ENCODE measurements at regions of chr1 and their contacts with region 1.

Region 1: DNA sequence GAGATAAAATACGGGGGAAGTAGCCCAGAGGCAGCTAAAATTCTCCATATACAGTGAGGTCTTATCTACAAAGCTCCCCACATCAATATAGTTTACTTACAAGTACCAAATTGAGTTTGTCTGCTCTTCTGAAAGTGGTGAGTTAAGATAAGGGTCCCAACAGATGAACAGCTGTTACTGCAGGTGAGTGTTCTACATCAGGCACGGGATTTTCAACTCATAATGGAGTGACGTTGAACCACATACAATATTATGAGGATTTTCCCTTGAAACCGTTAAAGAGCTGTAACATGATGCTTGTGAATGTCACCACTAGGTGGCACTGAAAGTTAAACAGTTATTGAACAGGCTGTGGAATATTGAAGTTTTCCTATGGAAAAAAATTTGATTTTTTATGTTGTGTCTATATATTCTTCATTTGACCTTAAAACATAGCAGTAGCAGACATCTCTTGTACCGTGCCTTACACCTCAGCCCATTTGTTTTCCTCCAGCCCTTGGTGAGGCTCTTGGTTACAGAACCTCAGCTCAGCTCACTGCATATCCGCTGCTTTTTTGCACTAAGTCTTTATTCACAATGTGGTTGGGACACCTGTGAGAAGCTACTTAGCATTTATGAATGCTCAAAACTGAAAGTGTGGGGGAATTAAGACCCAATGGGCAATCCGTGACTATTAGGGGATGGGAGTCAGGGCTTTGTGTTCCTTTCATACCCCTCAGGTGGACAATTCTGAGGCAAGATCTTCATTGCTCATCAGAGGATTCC is 23.2 kb downstream of the CD1D start:
- DNase-seq: no peak
- ATAC-seq: peak; percentile 71
- H3K4me3 Mint-ChIP-seq: no peak overlapping the region
- H3K27ac Mint-ChIP-seq: no peak overlapping the region
- H3K4me1 Mint-ChIP-seq: peaks cover 11% of the 10 kb centered on the region
- H3K27me3 Mint-ChIP-seq: peaks cover 30% of the 10 kb centered on the region

Region 2: DNA sequence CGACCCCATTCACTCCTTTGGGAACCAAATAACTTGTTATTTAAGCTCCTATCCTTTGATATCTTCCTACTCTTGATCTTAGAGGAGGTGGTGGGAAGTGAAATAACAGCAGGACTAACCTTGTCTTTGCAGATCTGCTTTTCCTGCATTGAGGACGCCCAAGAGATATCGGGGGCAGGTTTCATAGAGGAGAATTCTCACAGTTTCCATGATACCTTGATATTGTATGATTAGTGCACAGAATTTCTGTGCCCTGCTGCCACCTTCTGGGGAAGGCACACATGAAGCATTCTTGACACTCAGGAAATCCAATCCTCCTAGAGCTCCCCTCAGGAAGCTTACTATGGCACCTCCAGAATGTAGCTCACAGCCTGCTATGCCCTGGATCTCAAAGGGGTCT is 125.9 kb after region 1 on chr1:
- CTCF ChIA-PET with region 1: interaction called, 20 read pairs
- DNase-seq: no peak
- ATAC-seq: no peak
- H3K4me3 Mint-ChIP-seq: no peak overlapping the region
- H3K27ac Mint-ChIP-seq: no peak overlapping the region
- H3K4me1 Mint-ChIP-seq: peaks cover 12% of the 10 kb centered on the region
- H3K27me3 Mint-ChIP-seq: peaks cover 4% of the 10 kb centered on the region

Region 3: DNA sequence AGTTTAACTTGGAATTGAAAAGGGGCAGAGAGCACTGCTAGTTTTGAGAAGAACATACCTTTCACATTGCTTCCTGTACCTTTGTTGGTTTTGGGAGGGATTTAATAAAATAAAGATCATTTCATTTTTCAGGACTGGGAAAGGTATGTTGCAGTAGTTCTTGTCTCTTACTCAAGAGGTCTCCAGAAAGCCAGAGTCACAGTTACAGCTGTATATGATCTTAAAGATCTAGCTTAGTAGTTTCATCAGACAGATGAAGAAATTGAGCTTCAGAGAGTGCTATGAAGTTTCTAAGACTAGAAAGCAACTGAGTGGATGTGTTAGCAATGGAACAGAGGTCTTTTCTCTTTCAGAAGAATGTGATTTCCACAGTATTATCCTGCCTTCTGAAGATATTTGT is 221.2 kb after region 1 on chr1:
- CTCF ChIA-PET with region 1: no interaction called
- DNase-seq: no peak
- ATAC-seq: no peak
- H3K4me3 Mint-ChIP-seq: no peak overlapping the region
- H3K27ac Mint-ChIP-seq: no peak overlapping the region
- H3K4me1 Mint-ChIP-seq: no peaks in the 10 kb centered on the region
- H3K27me3 Mint-ChIP-seq: peaks cover 14% of the 10 kb centered on the region